ENCODE measurements at regions of chr1 and their contacts with region 1.

Region 1: GRCh38 chr1:9196129-9197040 is 38.2 kb upstream of the H6PD start:
- DNase-seq: peak; percentile 71
- CTCF ChIP-seq: peak; percentile 85

Region 2: DNA sequence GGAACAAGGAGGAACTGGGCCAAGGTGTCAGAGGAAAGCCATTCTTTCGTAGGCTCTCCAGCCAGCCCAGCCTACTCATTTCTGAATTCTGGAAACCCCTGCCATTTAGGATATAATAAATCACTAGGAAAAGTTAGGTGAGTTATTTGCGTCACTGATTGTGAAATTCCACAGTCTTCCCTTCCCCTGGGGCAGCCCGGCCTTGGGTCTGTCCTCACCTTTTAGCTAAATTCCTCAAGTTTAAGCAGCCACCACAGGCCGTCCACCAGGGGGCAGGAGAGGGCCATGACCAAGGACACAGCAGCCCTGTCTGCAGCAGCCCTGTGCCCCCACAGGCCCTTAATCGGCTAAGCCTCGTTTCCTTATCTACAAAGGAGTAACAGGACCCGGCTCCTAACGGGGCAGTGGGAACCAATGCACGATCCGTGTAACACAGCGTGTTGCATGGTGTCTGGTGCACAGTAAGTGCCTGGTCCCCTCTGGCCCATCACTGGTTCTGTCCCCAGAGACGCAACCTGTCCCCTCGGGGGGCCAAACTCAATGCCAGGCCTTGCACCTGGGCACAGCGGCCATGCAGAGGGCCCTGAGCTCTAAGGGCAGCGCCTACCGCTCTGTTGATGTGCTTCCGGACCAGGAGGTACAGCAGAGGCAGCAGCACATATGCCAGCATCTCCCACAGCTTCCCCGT is 85.6 kb before region 1 on chr1:
- in situ Hi-C with region 1: loop called (anchors 10 kb)
- DNase-seq: peak; percentile 84
- CTCF ChIP-seq: peak; percentile 95

Region 3: GRCh38 chr1:9145021-9145668 is 51.2 kb before region 1 on chr1:
- in situ Hi-C with region 1: loop called (anchors 10 kb)
- DNase-seq: peak; percentile 65
- CTCF ChIP-seq: no peak